Heart left ventricle (tissue), 16 donors: ENCODE measurements at regions of chr6 and their contacts with region 1.

Region 1: DNA sequence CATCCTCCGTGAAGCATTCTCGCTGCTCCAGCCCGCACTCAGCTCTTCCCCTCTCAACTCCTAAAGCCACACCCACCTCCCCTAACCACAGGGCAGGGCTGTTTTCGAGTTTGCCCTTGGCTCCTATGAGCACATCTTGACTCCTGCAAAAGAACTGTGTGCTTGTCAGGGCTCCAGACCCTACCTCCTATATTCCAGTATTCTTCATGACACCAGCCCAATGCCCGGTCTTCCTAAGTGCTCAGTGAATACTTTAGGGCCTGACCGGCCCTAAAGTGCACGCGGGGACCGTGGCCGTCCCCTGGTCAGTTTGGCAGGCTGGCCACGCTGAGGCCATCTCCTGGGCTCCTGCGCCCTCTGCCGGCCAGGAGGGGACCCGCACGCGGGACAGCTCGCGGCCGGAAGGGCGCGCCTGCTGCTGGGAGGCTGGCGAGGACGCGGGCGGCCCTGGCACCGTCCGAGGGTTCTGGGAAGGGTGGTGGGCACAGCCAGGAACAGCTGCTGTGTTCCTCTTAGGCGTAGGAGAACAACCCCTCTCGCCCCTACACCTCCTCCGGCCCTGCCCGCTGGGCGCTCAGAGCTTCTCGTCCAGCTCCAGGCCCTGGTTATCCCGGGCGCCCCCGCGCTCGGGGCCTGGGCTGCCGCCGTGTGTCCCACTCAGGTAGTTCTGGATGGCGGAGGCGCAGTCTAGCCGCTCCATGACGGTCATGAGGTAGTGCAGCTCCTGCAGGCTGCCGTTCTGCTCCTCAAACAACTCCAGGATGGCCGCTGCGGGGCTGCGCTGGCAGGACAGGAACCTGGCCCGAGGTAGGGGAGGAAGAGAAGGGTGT is 11.0 kb downstream of the UNC5CL start:
- DNase-seq: peak; percentile 85 to 94 (median 87)
- ATAC-seq: peak; percentile 77 to 97 (median 94)
- H3K4me3 ChIP-seq: peak overlapping the region; percentile 23 to 73 (median 60)
- H3K27ac ChIP-seq: peak overlapping the region; percentile 42 to 85 (median 75)
- H3K4me1 ChIP-seq: peaks cover 0 to 23% (median 12%) of the 10 kb centered on the region in 12 donors
- H3K27me3 ChIP-seq: no peaks in the 10 kb centered on the region
- CTCF ChIP-seq: peak; percentile 98 to 100 (median 99)
- POLR2A ChIP-seq: peak in 1 of 2 donors; percentile 14

Region 2: DNA sequence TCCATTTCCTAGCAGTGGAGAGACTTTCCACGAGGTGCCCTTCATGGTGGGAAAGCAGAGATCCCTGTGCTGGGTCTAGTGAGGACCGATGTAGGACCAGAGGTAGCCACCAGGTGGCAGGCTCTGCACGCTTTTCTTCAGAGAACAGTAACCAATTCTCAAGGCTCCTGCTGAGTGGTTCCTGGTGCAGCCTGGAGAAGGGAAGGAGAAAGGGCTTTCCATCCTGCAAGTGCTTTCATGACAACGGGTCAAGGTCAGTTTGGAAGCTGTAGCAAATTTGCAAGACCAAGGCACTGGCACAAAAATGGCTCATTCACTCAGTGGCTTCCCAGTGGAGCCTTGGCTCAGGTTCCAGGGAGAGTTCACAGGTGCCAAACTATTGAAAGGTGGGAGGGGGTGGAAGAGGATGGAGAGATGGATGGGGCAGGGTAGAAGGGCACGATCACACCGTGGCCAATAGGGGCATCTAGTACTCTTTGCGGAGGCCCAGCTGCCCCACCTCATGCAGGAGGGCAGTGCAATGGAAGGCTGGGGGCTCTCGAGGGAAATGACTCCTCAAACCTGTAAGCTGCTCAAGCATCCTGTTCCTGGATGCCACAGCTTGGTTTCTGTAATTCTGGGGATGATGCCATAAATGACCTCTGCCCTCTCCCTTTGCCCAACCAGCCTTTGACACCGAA is 1680.0 kb before region 1 on chr6:
- intact Hi-C with region 1: loop called in 4 of 10 experiments (anchors 5 to 10 kb)
- DNase-seq: peak; percentile 43 to 70 (median 55)
- ATAC-seq: peak in 3 of 4 donors; percentile 63 to 78 (median 71)
- H3K4me3 ChIP-seq: no peak overlapping the region
- H3K27ac ChIP-seq: no peak overlapping the region
- H3K4me1 ChIP-seq: peaks cover 0 to 6% (median 0%) of the 10 kb centered on the region in 12 donors
- H3K27me3 ChIP-seq: no peaks in the 10 kb centered on the region
- CTCF ChIP-seq: peak; percentile 76 to 92 (median 84)
- POLR2A ChIP-seq: no peak

Region 3: DNA sequence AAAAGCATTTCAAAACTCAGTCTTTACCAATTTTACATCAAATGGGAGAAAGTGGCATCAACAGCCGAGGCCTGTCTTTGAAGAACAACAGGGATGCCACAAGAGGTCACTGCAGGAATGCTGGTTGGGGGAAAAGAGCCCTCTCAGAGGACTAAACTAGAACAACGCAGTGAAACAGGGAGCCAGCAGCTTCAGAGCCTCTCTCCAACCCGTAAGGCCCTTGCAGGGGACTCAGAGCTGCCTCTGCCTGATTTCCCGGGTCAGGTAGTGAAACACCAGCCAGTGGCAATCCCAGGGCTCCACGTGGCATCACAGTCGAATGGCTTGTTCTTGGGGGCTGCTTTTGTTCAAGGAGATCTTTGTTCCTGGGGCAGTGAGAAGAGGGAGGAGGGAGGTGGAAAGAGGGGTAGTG is 1650.5 kb before region 1 on chr6:
- intact Hi-C with region 1: loop called in 1 of 10 experiments (anchors 10 kb)
- DNase-seq: peak in 4 of 5 donors; percentile 59 to 69 (median 62)
- ATAC-seq: peak; percentile 62 to 94 (median 88)
- H3K4me3 ChIP-seq: no peak overlapping the region
- H3K27ac ChIP-seq: no peak overlapping the region
- H3K4me1 ChIP-seq: peaks cover 0 to 10% (median 2%) of the 10 kb centered on the region in 12 donors
- H3K27me3 ChIP-seq: no peaks in the 10 kb centered on the region
- CTCF ChIP-seq: peak; percentile 35 to 77 (median 68)
- POLR2A ChIP-seq: no peak

Region 4: DNA sequence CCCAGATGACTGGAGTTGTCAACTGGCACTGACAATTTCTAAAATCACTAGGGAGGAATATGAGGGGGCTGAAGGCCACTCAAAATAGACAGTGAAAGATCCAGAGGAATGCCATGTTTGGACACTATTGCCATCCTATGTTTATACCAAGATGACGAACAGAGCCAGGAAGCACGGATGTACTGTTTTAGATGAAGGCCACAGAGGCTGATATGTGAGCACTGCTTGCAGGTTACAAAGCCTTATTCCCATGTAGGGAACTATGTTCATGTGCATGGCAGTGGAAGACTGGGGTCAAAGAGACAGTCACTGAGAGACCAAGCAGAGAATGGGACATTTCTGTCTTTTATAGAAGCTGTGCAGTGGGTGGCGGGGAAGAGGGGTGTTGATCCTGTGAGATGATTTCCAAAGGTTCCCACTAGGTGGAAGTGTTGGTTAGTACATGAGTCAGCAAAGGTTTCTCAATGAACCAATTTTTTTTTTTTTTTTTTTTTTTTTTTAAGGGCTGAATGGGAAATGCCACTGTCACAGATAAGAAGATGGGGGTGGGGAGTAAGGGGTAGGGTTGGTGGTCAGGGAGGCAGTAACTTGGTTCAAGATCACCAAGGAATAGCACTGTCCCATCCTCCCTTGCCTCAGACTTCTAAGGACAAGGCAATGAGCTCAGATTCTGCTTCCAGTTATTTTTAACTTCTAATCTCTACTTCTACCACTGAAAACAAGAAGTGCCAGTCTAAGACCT is 1047.0 kb before region 1 on chr6:
- intact Hi-C with region 1: loop called in 5 of 10 experiments (anchors 2 to 10 kb)
- DNase-seq: peak in 1 of 5 donors; percentile 18
- ATAC-seq: peak; percentile 59 to 82 (median 68)
- H3K4me3 ChIP-seq: no peak overlapping the region
- H3K27ac ChIP-seq: peak overlapping the region in 4 of 12 donors; percentile 19 to 59 (median 42)
- H3K4me1 ChIP-seq: peaks cover 0 to 34% (median 8%) of the 10 kb centered on the region in 12 donors
- H3K27me3 ChIP-seq: no peaks in the 10 kb centered on the region
- CTCF ChIP-seq: peak in 11 of 12 donors; percentile 20 to 59 (median 47)
- POLR2A ChIP-seq: no peak

Region 5: GRCh38 chr6:40328405-40328987 is 699.5 kb before region 1 on chr6:
- intact Hi-C with region 1: loop called in 1 of 10 experiments (anchors 10 kb)
- DNase-seq: no peak
- ATAC-seq: peak; percentile 25 to 51 (median 40)
- H3K4me3 ChIP-seq: no peak overlapping the region
- H3K27ac ChIP-seq: no peak overlapping the region
- H3K4me1 ChIP-seq: peaks cover 0 to 14% (median 4%) of the 10 kb centered on the region in 12 donors
- H3K27me3 ChIP-seq: peaks cover 0 to 44% (median 6%) of the 10 kb centered on the region in 9 donors
- CTCF ChIP-seq: peak; percentile 24 to 61 (median 44)
- POLR2A ChIP-seq: no peak

Region 6: GRCh38 chr6:40492187-40492586 is 535.8 kb before region 1 on chr6:
- intact Hi-C with region 1: no loop called
- DNase-seq: peak in 1 of 5 donors; percentile 25
- ATAC-seq: no peak
- H3K4me3 ChIP-seq: no peak overlapping the region
- H3K27ac ChIP-seq: no peak overlapping the region
- H3K4me1 ChIP-seq: no peaks in the 10 kb centered on the region
- H3K27me3 ChIP-seq: peaks cover 0 to 25% (median 3%) of the 10 kb centered on the region in 9 donors
- CTCF ChIP-seq: no peak
- POLR2A ChIP-seq: no peak

Region 7: DNA sequence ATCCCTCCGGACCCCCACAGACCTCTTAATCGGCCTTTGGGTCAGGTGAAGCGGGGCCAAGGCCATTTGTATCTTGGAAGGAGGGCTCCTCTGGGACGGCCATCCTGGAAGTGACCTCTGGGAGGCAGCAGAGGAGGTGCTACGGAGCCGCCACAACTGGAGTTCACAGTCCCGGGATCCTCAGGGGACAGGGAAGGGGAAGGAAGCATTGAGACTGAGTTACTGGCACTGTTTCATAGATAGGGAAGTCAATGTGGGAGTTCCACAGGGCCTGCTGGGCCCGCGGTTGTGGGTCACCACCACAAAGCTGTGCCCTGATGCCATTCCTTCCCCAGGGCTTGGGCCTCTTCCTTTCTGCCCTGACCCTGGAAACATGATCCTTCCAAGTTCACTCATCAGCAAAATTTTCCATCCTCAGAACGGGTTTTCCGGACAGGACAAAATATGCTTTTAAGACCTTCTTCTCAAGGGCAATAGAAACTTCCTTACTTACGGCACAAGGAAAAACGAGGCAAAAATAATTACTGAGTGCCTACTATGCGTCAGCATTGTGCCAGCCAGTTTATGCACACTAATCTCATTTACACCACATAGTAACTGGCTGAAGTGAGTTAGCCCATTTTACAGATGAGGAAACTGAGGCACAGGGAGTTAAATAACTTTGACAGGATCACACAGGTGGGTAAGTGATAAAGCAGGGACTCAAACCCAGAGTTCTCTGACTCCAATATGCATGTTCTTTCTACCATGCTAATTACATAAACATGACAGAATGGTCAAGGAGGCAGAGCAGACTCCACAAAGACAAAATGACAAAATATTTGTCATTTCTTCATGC is 132.8 kb before region 1 on chr6:
- intact Hi-C with region 1: loop called (anchors 2 to 10 kb)
- DNase-seq: peak; percentile 47 to 73 (median 65)
- ATAC-seq: peak; percentile 45 to 88 (median 82)
- H3K4me3 ChIP-seq: no peak overlapping the region
- H3K27ac ChIP-seq: peak overlapping the region in 7 of 12 donors; percentile 32 to 75 (median 55)
- H3K4me1 ChIP-seq: peaks cover 0 to 39% (median 16%) of the 10 kb centered on the region in 12 donors
- H3K27me3 ChIP-seq: no peaks in the 10 kb centered on the region
- CTCF ChIP-seq: peak; percentile 22 to 71 (median 56)
- POLR2A ChIP-seq: no peak

Region 8: GRCh38 chr6:41013466-41014153 is 14.4 kb before region 1 on chr6:
- intact Hi-C with region 1: no loop called
- DNase-seq: no peak
- ATAC-seq: no peak
- H3K4me3 ChIP-seq: no peak overlapping the region
- H3K27ac ChIP-seq: no peak overlapping the region
- H3K4me1 ChIP-seq: no peaks in the 10 kb centered on the region
- H3K27me3 ChIP-seq: no peaks in the 10 kb centered on the region
- CTCF ChIP-seq: no peak
- POLR2A ChIP-seq: no peak

Region 9: DNA sequence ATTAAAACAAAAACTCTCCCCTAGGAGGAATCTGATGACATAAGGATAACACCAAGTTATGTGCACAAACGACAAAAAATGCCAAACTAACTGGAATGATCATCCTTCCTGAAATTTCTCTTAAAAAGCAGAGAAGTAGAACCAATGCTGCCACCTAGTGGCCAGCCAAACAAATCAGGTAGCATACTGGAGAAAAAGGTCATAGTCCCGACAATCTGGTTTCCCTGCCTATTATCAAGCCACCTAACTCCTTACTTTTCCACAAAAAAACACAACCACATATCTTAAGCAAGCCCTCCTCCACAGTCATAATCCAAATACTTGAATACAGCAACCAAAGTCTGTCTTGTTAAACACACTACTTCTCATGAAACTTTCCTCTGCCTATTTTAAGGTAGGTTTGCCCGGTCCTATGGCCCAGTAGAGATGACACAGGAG is 38.9 kb after region 1 on chr6:
- intact Hi-C with region 1: loop called in 7 of 10 experiments (anchors 2 to 5 kb)
- DNase-seq: peak in 4 of 5 donors; percentile 61 to 76 (median 73)
- ATAC-seq: no peak
- H3K4me3 ChIP-seq: no peak overlapping the region
- H3K27ac ChIP-seq: peak overlapping the region in 2 of 12 donors; percentile 3 to 7
- H3K4me1 ChIP-seq: peaks cover 0 to 38% (median 11%) of the 10 kb centered on the region in 12 donors
- H3K27me3 ChIP-seq: no peaks in the 10 kb centered on the region
- CTCF ChIP-seq: peak; percentile 74 to 90 (median 86)
- POLR2A ChIP-seq: no peak